ENCODE measurements at regions of chr3 and their contacts with region 1.

Region 1: DNA sequence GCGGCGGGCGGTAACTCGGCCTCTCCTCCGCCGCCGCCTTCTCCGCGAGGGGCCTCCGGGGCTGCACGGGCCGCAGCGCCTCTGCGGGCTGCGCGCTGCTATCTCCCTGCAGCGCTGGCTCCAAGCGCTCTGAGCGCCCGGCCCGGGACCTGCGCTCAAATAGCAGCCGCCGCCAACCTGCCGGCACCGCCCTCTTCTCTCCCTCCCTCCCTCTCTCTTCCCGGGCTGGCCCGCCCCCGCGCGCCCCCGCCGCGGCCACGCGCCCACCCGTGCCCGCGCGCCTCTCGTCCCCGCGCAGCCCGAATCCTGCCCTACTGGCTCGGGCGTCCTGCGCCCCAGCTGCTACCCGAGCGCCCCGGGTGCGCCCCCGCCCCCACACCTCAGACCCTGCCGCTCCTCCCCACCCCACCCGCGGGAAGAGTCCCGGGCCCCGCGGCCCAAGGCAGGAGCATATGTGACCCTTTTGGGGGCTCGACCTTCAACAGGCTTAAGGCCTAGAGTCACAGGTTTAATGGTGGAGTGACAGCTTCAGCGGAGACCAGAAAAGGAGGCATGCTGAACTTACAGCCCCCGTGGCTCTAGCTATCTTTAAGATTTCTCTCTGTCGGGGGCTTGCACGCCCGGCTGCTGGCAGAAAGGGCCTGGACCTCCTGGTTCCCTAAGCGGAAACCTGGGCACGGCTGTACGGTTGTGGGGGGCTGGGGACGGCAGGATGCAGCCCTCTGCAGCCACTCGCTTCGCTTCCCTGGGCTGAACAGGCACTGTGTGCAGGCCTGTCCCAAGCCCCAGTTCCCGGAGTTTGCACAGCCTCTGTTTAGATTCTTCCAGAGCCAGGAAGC is at the start of gene CACNA2D2:
- DNase-seq: peak; percentile 45 to 88 (median 74)
- ATAC-seq: peak; percentile 93
- H3K4me3 ChIP-seq: peak within 1 kb of the TSS; percentile 49 to 52
- H3K4me3 Mint-ChIP-seq: peak within 1 kb of the TSS; percentile 79
- H3K27ac ChIP-seq: peak within 1 kb of the TSS in 1 of 2 experiments; percentile 7
- H3K27ac Mint-ChIP-seq: peak within 1 kb of the TSS; percentile 13
- H3K4me1 ChIP-seq: peaks cover 17% of the 10 kb centered on the region
- H3K4me1 Mint-ChIP-seq: peaks cover 10% of the 10 kb centered on the region
- H3K27me3 ChIP-seq: no peaks in the 10 kb centered on the region
- H3K27me3 Mint-ChIP-seq: peaks cover 5% of the 10 kb centered on the region
- CTCF ChIP-seq: no peak
- total RNA-seq, gene CACNA2D2: 7.2 to 8.7 TPM

Region 2: DNA sequence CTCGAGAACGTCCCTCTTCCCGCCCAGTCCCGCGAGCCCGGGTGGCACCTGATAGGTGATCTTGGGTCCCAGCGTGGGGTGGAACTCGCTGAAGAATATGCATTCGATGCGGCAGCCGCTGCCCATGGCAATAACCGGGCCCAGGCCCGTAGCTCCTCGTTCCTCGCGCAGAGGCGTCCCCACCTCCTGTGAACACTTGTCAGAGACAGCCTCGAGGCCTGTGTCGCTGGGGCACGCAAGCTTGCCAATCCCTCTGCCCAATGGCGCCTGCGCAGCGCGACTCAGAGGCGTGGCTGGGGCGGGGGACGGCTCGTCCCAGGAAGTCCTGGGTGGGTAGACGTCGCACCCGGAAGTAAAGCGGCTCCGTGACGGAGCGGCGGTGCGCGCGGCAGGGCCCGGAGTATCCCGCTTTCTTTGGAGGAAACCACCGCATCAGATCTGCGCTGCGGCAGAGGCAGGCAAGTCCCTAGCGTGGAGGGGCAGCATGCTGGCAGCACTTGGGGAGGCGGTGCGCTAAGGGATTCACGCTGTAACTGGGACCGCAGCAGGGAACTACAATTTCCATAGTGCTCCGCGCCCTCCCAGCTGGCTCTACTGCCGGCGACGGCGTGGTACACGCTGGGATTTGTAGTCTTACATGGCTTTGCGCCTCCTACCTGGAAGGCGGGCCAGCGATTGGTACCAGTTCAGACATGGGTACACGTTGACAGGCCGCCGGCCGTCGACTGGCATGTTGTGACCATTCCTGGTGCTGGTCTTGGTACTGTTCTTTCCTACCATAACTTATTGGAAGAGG is 153.0 kb before region 1 on chr3 and contains the starts of genes CYB561D2 and NPRL2:
- CTCF ChIA-PET with region 1: no interaction called
- POLR2A ChIA-PET with region 1: no interaction called
- intact Hi-C with region 1: no loop called
- DNase-seq: peak; percentile 98 to 100 (median 99)
- ATAC-seq: peak; percentile 88
- H3K4me3 ChIP-seq: peak within 1 kb of the TSS; percentile 79
- H3K4me3 Mint-ChIP-seq: peak within 1 kb of the TSS; percentile 98
- H3K27ac ChIP-seq: peak within 1 kb of the TSS; percentile 83 to 94
- H3K27ac Mint-ChIP-seq: peak within 1 kb of the TSS; percentile 99
- H3K4me1 ChIP-seq: peaks cover 54% of the 10 kb centered on the region
- H3K4me1 Mint-ChIP-seq: peaks cover 65% of the 10 kb centered on the region
- H3K27me3 ChIP-seq: no peaks in the 10 kb centered on the region
- H3K27me3 Mint-ChIP-seq: no peaks in the 10 kb centered on the region
- CTCF ChIP-seq: no peak
- total RNA-seq, gene CYB561D2: 24.2 to 24.3 TPM
- total RNA-seq, gene NPRL2: 28.7 to 30.9 TPM

Region 3: GRCh38 chr3:50365080-50365841 is 138.5 kb before region 1 on chr3:
- CTCF ChIA-PET with region 1: no interaction called
- POLR2A ChIA-PET with region 1: no interaction called
- intact Hi-C with region 1: loop called (anchors 1 kb)
- DNase-seq: peak; percentile 89 to 98 (median 94)
- ATAC-seq: peak; percentile 95
- H3K4me3 ChIP-seq: peak overlapping the region; percentile 68 to 81
- H3K4me3 Mint-ChIP-seq: peak overlapping the region; percentile 87
- H3K27ac ChIP-seq: peak overlapping the region; percentile 91 to 92
- H3K27ac Mint-ChIP-seq: peak overlapping the region; percentile 95
- H3K4me1 ChIP-seq: peaks cover 20% of the 10 kb centered on the region
- H3K4me1 Mint-ChIP-seq: peaks cover 35% of the 10 kb centered on the region
- H3K27me3 ChIP-seq: no peaks in the 10 kb centered on the region
- H3K27me3 Mint-ChIP-seq: no peaks in the 10 kb centered on the region
- CTCF ChIP-seq: no peak

Region 4: DNA sequence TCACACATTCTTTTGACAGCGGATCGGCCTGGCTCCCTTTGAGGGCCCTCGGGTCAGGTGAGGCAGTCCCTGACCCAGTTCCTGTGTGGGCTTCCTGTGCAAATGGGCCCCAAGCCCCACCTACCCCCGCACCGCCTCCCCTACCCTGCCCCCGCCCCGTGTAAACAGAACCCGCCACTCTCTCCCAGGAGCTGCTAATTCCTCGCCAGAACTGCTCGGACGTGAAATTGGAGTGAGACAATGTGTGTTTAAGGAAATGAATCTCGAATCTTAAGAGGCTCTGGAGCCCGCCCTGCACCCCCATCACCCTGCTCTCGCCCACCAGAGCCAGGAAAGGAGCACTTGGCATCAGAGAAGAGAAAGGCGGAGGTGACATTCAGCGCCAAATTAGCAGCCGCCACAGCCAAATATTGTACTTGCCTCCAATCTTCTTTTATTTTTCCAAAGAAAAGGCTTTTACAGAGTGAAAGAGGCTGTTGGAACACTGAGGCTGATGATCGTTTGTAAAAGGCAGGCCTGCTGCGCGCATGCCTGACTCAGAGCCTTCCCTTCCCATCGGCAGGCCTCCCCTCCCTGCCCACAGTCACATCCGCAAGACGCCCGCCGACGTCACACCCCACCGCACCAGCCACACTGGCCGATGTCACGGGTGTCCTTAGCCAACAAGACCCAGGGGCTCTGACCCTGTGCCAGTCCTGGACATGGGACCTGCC is 53.4 kb before region 1 on chr3:
- CTCF ChIA-PET with region 1: no interaction called
- POLR2A ChIA-PET with region 1: interaction called, 3 read pairs
- intact Hi-C with region 1: loop called in 1 of 2 experiments (anchors 5 kb)
- DNase-seq: peak; percentile 48 to 82 (median 75)
- ATAC-seq: peak; percentile 80
- H3K4me3 ChIP-seq: peak overlapping the region; percentile 43 to 54
- H3K4me3 Mint-ChIP-seq: peak overlapping the region; percentile 86
- H3K27ac ChIP-seq: peak overlapping the region; percentile 83 to 88
- H3K27ac Mint-ChIP-seq: peak overlapping the region; percentile 93
- H3K4me1 ChIP-seq: peaks cover 28% of the 10 kb centered on the region
- H3K4me1 Mint-ChIP-seq: peaks cover 32% of the 10 kb centered on the region
- H3K27me3 ChIP-seq: no peaks in the 10 kb centered on the region
- H3K27me3 Mint-ChIP-seq: no peaks in the 10 kb centered on the region
- CTCF ChIP-seq: no peak

Region 5: GRCh38 chr3:50474717-50475116 is 29.0 kb before region 1 on chr3:
- CTCF ChIA-PET with region 1: no interaction called
- POLR2A ChIA-PET with region 1: no interaction called
- intact Hi-C with region 1: no loop called
- DNase-seq: no peak
- ATAC-seq: no peak
- H3K4me3 ChIP-seq: no peak overlapping the region
- H3K4me3 Mint-ChIP-seq: no peak overlapping the region
- H3K27ac ChIP-seq: no peak overlapping the region
- H3K27ac Mint-ChIP-seq: no peak overlapping the region
- H3K4me1 ChIP-seq: peaks cover 12% of the 10 kb centered on the region
- H3K4me1 Mint-ChIP-seq: peaks cover 25% of the 10 kb centered on the region
- H3K27me3 ChIP-seq: no peaks in the 10 kb centered on the region
- H3K27me3 Mint-ChIP-seq: no peaks in the 10 kb centered on the region
- CTCF ChIP-seq: no peak